Calu3 (cell line): ENCODE measurements at regions of chr7 and their contacts with region 1.

Region 1: DNA sequence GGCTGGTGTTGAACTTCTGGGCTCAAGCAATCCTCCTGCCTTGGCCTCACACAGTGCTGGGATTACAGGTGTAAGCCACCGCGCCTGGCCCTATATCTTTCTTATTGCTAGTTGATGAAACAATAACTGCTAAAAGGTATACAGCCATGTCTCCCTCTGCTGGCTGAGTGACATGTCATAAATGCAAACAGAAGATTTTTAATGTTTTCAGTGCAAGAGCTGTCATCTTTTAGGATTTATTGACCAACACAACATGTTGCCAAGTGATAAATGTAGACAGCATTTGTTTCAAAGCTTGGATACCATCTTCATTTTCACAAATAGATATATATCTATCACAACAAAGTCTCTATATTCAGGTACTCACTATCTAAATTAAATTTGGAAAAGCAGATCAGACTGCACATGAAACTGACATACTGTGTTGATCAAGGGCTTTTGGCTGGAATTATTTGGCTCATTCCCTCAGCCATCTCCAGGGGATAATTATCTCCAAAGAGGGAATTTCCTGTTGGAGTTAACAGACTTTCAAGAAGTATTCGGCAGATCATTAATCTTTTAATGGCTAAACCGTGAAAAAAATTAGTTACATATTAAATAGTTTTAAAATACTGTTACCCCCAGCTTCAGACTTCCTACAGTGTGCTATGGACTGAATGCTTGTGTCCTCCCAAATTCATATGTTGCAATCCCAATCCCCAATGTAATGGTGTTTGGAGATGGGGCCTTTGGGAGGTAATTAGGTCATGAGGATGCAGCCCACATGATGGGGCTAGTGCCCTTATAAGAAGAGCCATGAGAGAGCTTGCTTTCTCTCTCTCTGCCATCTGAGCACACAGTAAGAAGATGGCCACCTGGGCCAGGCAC is 41.3 kb upstream of the SRPK2 start:
- DNase-seq: peak; percentile 50
- H3K4me3 Mint-ChIP-seq: no peak overlapping the region
- H3K27ac Mint-ChIP-seq: no peak overlapping the region
- H3K4me1 Mint-ChIP-seq: peaks cover 9% of the 10 kb centered on the region
- H3K27me3 Mint-ChIP-seq: no peaks in the 10 kb centered on the region
- CTCF ChIP-seq: peak; percentile 43

Region 2: GRCh38 chr7:105141068-105141467 is 288.9 kb before region 1 on chr7:
- CTCF ChIA-PET with region 1: interaction called, 3 read pairs
- intact Hi-C with region 1: loop called (anchors 5 kb)
- DNase-seq: no peak
- H3K4me3 Mint-ChIP-seq: no peak overlapping the region
- H3K27ac Mint-ChIP-seq: no peak overlapping the region
- H3K4me1 Mint-ChIP-seq: no peaks in the 10 kb centered on the region
- H3K27me3 Mint-ChIP-seq: no peaks in the 10 kb centered on the region
- CTCF ChIP-seq: no peak